Prostate gland (tissue), 2 donors: ENCODE measurements at regions of chr18 and their contacts with region 1.

Region 1: DNA sequence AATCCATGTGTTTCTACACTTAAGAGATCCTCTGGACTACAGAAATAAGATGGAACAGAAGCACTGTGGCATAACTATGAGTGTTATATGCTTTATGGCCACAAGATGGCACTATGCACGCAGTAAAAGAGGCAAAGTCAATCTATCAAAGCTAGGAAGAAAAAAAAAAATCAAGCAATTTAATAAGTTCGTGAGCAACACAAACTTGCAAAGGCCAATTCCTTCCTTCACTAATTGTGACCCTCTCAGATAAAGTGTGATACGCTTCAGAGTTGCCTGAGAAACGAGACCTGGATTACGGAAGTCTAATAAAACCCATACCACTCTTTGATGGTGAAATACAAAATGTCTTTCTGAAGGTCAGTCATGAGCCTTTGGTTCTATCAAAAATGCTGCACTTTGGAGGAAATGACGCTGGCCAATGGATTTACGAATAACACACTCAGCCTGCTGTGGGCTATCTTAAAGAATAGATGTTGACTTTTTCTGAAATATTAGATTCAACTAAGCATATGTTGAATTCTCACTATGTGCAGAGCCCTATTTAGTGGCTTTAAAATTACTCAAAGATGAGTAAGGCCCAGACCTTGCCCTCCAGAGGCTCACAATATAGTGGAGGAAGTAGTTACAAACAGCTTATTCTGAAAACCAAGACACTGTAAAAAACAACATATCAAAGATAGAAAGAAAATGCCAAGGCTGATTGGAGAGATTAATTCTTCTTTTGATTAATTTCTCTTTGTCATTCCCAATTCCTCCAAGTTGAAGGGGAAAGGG is 35.5 kb upstream of the TTR start:
- DNase-seq: peak; percentile 56
- H3K4me3 ChIP-seq: no peak overlapping the region
- H3K27ac ChIP-seq: no peak overlapping the region
- H3K4me1 ChIP-seq: no peaks in the 10 kb centered on the region
- H3K27me3 ChIP-seq: no peaks in the 10 kb centered on the region
- CTCF ChIP-seq: peak; percentile 51 to 88 (median 86)
- POLR2A ChIP-seq: no peak

Region 2: DNA sequence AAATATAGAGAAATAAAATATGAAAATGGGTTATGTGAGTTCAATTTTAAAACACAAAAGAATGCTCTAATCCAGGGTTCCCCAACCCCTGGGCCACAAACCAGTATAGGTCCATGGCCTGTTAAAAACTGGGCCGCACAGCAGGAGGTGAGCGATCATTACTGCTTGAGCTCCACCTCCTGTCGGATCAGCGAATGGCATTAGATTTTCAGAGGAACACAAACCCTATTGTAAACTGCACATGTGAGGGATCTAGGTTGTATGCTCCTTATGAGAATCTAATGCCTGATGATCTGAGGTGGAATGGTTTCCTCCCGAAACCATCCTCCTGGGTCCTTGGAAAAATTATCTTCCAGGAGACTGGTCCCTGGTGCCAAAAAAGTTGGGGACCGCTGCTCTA is 70.2 kb after region 1 on chr18:
- intact Hi-C with region 1: no loop called
- DNase-seq: no peak
- H3K4me3 ChIP-seq: no peak overlapping the region
- H3K27ac ChIP-seq: no peak overlapping the region
- H3K4me1 ChIP-seq: no peaks in the 10 kb centered on the region
- H3K27me3 ChIP-seq: no peaks in the 10 kb centered on the region
- CTCF ChIP-seq: no peak
- POLR2A ChIP-seq: no peak

Region 3: GRCh38 chr18:31646332-31647126 is 90.4 kb after region 1 on chr18:
- intact Hi-C with region 1: no loop called
- DNase-seq: no peak
- H3K4me3 ChIP-seq: no peak overlapping the region
- H3K27ac ChIP-seq: peak overlapping the region in 1 of 2 donors; percentile 4
- H3K4me1 ChIP-seq: no peaks in the 10 kb centered on the region
- H3K27me3 ChIP-seq: no peaks in the 10 kb centered on the region
- CTCF ChIP-seq: no peak
- POLR2A ChIP-seq: no peak

Region 4: DNA sequence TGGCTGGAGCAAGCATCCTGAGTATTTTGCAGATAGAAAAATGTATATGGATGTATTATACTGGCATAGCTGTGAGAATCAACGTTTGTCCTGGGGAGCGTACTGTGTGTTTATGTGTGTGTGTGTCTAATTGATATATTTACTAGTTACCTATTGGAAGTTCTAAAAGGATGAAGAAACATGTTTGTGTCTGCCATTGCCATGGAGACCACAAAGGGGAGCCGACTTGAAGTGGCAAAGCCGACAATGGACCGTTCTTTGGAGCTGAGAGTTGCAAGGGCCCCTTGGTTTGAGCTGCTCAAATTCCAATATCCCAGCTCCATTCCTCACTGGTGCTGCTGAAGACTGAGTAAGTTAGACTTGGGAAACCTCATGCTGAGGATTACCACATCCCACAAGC is 218.8 kb after region 1 on chr18:
- intact Hi-C with region 1: no loop called
- DNase-seq: no peak
- H3K4me3 ChIP-seq: no peak overlapping the region
- H3K27ac ChIP-seq: no peak overlapping the region
- H3K4me1 ChIP-seq: no peaks in the 10 kb centered on the region
- H3K27me3 ChIP-seq: no peaks in the 10 kb centered on the region
- CTCF ChIP-seq: no peak
- POLR2A ChIP-seq: no peak

Region 5: DNA sequence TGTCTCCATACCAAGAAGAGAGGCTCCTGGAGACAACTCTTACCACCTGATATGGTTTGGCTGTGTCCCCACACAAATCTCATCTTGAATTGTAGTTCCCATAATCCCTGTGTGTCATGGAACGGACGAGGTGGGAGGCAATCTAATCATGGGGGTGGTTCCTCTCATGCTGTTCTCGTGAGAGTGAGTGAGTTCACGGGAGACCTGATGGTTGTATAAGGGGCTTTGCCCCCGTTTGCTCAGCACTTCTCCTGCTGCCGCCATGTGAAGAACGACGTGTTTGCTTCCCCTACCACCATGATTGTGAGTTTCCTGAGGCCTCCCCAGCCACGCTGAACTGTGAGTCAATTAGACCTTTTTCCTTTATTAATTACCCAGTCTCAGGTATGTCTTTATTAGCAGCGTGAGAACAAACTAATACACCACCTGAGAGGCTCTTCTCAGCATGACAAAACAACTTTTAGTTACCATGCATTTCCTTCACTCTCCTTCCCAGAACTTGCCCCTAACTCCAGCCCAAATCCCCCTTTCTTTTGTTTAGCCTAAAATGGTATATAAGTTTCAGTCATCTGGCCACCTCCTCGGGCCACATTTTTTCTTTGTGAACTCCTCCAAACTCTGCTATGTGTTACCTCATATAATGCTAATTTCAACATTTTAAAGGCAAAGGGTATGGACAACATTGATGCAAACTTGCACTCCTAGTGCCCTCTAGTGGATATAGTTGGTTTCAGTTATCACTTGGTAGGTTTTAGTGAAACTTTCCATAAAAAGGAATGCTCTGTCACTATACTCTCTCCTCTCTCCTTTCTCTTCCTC is 263.2 kb after region 1 on chr18:
- intact Hi-C with region 1: loop called (anchors 2 kb)
- DNase-seq: peak; percentile 12
- H3K4me3 ChIP-seq: no peak overlapping the region
- H3K27ac ChIP-seq: no peak overlapping the region
- H3K4me1 ChIP-seq: no peaks in the 10 kb centered on the region
- H3K27me3 ChIP-seq: no peaks in the 10 kb centered on the region
- CTCF ChIP-seq: peak; percentile 31 to 78 (median 74)
- POLR2A ChIP-seq: no peak

Region 6: DNA sequence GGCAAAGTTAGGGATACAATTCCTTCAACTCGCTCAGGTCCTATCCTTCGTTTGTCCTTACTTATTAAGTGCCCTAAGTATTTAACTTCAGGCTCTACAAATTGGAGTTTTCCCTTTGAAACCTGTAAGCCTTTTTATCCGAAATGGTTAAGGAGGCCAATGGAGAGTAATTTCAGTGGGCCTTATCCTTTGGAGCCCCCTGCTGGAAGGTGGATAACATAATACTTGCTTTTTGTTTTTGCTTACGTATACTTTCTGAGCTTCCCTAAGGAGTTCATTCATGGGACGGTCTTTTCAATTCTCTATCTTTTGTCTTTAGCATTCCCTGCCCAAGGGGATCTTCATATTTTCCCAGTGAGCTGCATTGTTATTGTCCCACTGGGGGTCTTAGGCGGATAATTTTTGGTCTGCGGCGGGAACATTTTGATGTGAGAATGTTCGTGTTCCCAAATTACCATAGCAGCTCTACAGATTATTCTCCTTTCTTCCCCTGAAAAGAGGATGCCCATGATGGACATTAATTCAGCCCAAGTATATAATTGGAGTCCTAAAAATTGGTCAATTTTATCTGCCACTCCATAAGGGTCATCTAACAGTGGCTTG is 421.2 kb after region 1 on chr18:
- intact Hi-C with region 1: loop called (anchors 10 kb)
- DNase-seq: no peak
- H3K4me3 ChIP-seq: no peak overlapping the region
- H3K27ac ChIP-seq: no peak overlapping the region
- H3K4me1 ChIP-seq: no peaks in the 10 kb centered on the region
- H3K27me3 ChIP-seq: no peaks in the 10 kb centered on the region
- CTCF ChIP-seq: peak; percentile 29 to 47 (median 44)
- POLR2A ChIP-seq: no peak

Region 7: GRCh38 chr18:32261003-32261402 is 704.8 kb after region 1 on chr18:
- intact Hi-C with region 1: no loop called
- DNase-seq: no peak
- H3K4me3 ChIP-seq: no peak overlapping the region
- H3K27ac ChIP-seq: no peak overlapping the region
- H3K4me1 ChIP-seq: no peaks in the 10 kb centered on the region
- H3K27me3 ChIP-seq: no peaks in the 10 kb centered on the region
- CTCF ChIP-seq: no peak
- POLR2A ChIP-seq: no peak